ENCODE measurements at regions of chr6 and their contacts with region 1.

Region 1: DNA sequence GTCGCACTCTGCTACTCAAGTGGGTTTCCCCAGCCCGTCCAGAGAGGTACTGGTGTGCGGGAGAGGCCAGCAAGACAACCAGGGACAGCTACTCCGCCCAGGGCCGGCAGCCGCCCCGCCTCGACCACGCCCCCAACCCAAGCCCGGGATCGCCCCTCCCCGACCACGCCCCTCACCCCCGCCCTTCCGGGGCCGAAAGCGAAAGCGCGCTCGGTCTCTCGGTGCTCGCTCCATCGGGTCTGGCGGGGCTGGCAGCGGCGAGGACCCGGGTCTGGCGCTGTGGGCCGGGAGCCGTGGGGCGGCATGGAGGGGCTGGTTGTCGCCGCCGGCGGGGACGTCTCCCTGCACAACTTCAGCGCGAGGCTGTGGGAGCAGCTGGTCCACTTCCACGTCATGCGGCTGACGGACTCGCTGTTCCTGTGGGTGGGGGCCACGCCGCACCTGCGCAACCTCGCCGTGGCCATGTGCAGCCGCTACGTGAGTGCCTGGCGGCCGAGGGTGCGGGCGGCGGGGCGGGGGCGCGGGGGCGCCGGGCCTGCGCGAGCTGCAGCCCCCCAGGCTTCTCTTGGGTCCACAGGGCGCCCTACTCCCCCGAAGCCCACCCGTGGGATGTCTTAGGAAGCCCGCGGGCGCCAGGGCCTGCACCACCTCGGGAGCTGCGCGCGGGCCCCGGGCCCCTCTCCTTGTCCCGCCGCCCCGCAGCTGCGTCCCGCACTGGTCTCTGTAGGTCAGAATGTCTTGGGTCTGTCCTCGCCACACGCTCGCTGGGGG is at the start of gene PSMG4:
- DNase-seq: peak; percentile 99
- H3K4me3 ChIP-seq: peak within 1 kb of the TSS; percentile 84 to 99 (median 96)
- H3K27ac ChIP-seq: peak within 1 kb of the TSS; percentile 71 to 89 (median 79)
- H3K4me1 ChIP-seq: peaks cover 20 to 50% (median 38%) of the 10 kb centered on the region in 6 donors
- H3K27me3 ChIP-seq: no peaks in the 10 kb centered on the region
- CTCF ChIP-seq: peak in 1 of 11 experiments; percentile 33
- POLR2A ChIP-seq: peak in 1 of 3 donors; percentile 45
- total RNA-seq, gene PSMG4: 12.1 to 21.0 (median 17.3) TPM

Region 2: DNA sequence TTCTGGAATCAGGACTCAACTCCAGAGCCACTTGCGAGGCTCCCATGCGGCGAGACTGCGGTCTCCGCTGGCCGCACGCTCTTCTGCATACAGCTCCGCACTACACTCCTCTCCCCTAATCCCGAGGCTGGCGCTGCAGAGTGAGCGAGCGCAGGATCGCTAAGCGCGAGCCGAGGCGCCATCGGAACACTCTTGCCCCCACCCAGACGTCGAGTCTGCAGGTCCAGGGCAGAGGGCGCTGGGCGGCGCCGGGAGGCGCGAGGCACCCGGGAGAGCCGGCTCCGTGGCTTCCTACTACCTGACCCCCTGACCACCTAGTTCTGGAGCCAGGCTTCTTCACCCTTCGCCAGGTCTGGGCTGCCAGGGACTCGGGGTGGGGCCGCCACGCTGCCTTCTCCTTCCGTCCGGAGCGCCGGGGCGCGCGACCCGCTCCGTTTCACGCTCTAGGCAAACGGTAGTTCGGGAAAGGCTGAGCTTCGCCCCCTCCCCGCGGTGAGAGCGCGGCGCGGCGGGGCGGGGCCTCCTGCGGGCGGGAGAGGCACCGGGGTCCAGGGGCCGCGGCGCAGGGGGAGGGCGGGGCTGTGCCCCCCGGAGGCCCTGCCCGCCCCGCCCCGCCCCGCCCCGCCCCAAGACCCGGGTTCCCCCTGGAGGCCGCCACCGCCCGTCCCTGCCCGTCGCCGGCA is 96.2 kb before region 1 on chr6:
- intact Hi-C with region 1: loop called (anchors 10 kb)
- DNase-seq: peak; percentile 90
- H3K4me3 ChIP-seq: peak overlapping the region; percentile 49 to 87 (median 64)
- H3K27ac ChIP-seq: peak overlapping the region; percentile 66 to 88 (median 84)
- H3K4me1 ChIP-seq: peaks cover 2 to 52% (median 26%) of the 10 kb centered on the region in 6 donors
- H3K27me3 ChIP-seq: peaks cover 0 to 24% (median 0%) of the 10 kb centered on the region in 7 donors
- CTCF ChIP-seq: peak in 3 of 11 experiments; percentile 7 to 27 (median 17)
- POLR2A ChIP-seq: no peak

Region 3: DNA sequence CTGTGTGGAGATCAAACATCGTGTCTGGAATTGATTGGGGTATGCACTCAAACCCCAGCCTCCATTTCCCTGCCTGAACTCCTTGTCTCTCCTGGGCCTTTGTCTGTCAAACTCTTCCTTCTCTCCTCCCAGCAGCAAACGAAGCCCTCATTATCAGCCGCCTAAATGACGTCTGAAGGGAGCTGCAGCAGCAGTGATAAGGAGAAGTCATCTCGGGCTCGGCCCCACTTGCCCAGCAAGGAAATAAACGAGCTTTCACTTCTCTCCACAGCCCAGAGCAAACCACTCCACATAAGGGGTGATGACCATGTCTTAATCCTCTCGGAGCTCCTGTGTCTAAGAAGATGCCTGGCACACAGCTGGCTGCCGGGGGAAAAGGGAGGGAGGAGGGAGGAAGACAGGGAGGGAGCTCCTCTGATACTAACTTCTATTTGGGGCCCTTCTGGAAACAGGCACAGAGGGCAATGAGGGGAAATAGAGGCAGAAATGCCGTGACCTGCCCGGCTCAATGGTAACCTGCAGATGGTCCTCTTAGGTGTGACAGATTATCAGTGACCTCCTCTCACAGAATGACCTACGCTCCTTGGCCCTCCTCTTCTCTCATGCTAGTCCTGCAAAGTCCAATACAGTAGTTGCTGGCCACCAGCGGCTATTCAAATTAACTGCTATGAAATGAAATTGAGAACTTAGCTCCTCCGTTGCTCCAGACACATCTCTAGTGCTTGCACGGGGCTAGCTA is 392.2 kb after region 1 on chr6:
- intact Hi-C with region 1: no loop called
- DNase-seq: no peak
- H3K4me3 ChIP-seq: no peak overlapping the region
- H3K27ac ChIP-seq: no peak overlapping the region
- H3K4me1 ChIP-seq: no peaks in the 10 kb centered on the region
- H3K27me3 ChIP-seq: peaks cover 0 to 10% (median 0%) of the 10 kb centered on the region in 7 donors
- CTCF ChIP-seq: no peak
- POLR2A ChIP-seq: no peak